Posterior cingulate gyrus (tissue), 11 donors: ENCODE measurements at regions of chr1 and their contacts with region 1.

Region 1: GRCh38 chr1:171485375-171486047 is at the start of gene PRRC2C:
- DNase-seq: peak; percentile 95 to 99 (median 97)

Region 2: DNA sequence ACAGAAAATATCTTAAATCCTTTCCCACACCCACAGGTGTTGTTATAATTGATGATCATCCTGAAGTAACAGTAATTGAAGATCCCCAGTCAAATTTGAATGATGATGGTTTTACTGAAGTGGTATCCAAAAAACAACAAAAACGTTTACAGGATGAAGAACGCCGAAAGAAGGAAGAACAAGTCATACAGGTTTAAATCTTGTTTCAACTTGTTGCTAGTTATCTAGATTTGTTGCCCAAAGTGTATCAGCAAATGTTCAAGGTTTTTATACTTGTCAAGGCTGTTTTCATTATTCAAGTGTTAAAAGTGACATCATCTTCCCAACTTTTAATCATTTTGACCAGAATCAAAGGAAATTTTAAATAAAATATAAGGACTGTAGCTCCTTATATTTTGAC is 64.5 kb after region 1 on chr1:
- intact Hi-C with region 1: no loop called
- DNase-seq: no peak

Region 3: GRCh38 chr1:171741872-171742576 is 256.5 kb after region 1 on chr1 and contains the start of gene VAMP4:
- intact Hi-C with region 1: loop called (anchors 1 kb)
- DNase-seq: peak; percentile 80 to 97 (median 86)

Region 4: DNA sequence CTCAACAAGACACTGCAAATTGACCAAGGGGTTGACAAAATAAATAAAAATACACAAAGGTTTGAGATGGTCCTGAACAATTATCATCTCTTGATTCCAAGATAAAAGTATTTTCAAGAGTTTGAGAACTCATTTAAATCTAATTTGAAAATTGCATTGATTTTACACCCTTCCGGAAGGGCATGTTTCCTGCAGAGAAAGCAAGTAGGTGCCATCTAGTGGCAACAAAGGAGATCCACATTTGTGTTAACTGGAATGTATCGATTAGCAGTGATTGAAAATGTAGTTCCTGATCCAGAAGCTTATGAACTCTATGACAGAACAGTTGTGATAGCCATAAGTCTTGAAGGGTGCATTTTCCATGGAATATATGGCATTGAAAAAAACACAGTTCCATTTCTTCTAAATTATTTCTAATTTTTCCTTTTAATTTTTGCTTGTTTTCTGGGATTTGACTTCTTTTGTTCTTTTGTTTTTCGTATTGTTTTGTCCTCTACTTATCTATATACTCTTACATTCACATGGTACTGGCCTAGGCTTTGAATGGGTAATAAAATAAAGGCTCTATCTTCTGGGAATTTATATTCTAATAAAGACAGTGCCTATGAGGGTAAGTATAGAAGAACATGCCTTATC is 499.5 kb after region 1 on chr1:
- intact Hi-C with region 1: loop called (anchors 10 kb)
- DNase-seq: no peak

Region 5: GRCh38 chr1:172532700-172533509 is 1047.4 kb after region 1 on chr1 and contains the start of gene SUCO:
- intact Hi-C with region 1: loop called (anchors 5 kb)
- DNase-seq: peak; percentile 100